ENCODE measurements at regions of chr16 and their contacts with region 1.

Region 1: GRCh38 chr16:8567750-8568617 is 22.3 kb downstream of the TMEM114 start:
- DNase-seq: peak; percentile 82
- H3K4me3 Mint-ChIP-seq: no peak overlapping the region
- H3K27ac Mint-ChIP-seq: no peak overlapping the region
- H3K4me1 Mint-ChIP-seq: peaks cover 7% of the 10 kb centered on the region
- H3K27me3 Mint-ChIP-seq: no peaks in the 10 kb centered on the region

Region 2: GRCh38 chr16:8655184-8655717 is 87.3 kb after region 1 on chr16:
- CTCF ChIA-PET with region 1: interaction called, 11 read pairs
- POLR2A ChIA-PET with region 1: no interaction called
- DNase-seq: peak; percentile 50
- H3K4me3 Mint-ChIP-seq: no peak overlapping the region
- H3K27ac Mint-ChIP-seq: no peak overlapping the region
- H3K4me1 Mint-ChIP-seq: peaks cover 5% of the 10 kb centered on the region
- H3K27me3 Mint-ChIP-seq: no peaks in the 10 kb centered on the region

Measured in activated CD4-positive, alpha-beta memory T cell treated with anti-CD3 and anti-CD28 coated beads, Interleukin-2, amount 10 ng/mL, durations not matched to agents 7 days and 5 days (primary cell).